Activated CD4-positive, alpha-beta memory T cell treated with anti-CD3 and anti-CD28 coated beads for 36 hours (primary cell): ENCODE measurements at regions of chr9 and their contacts with region 1.

Region 1: GRCh38 chr9:122159026-122159924 is at the starts of genes MORN5 and NDUFA8:
- DNase-seq: peak; percentile 96
- H3K4me3 Mint-ChIP-seq: peak within 1 kb of the TSS; percentile 99
- H3K27ac Mint-ChIP-seq: peak within 1 kb of the TSS; percentile 93
- H3K4me1 Mint-ChIP-seq: peaks cover 38% of the 10 kb centered on the region
- H3K27me3 Mint-ChIP-seq: peaks cover 17% of the 10 kb centered on the region
- total RNA-seq, gene MORN5: not detected
- total RNA-seq, gene NDUFA8: 48.3 to 53.3 TPM

Region 2: GRCh38 chr9:122264360-122265148 is 105.3 kb after region 1 on chr9 and contains the starts of genes MRRF and RBM18:
- CTCF ChIA-PET with region 1: interaction called, 4 read pairs
- POLR2A ChIA-PET with region 1: interaction called, 4 read pairs
- intact Hi-C with region 1: loop called (anchors 1 kb)
- DNase-seq: peak; percentile 94
- H3K4me3 Mint-ChIP-seq: peak within 1 kb of the TSS; percentile 99
- H3K27ac Mint-ChIP-seq: peak within 1 kb of the TSS; percentile 98
- H3K4me1 Mint-ChIP-seq: peaks cover 46% of the 10 kb centered on the region
- H3K27me3 Mint-ChIP-seq: no peaks in the 10 kb centered on the region
- total RNA-seq, gene MRRF: 47.2 to 52.5 TPM
- total RNA-seq, gene RBM18: 25.1 to 25.9 TPM

Region 3: DNA sequence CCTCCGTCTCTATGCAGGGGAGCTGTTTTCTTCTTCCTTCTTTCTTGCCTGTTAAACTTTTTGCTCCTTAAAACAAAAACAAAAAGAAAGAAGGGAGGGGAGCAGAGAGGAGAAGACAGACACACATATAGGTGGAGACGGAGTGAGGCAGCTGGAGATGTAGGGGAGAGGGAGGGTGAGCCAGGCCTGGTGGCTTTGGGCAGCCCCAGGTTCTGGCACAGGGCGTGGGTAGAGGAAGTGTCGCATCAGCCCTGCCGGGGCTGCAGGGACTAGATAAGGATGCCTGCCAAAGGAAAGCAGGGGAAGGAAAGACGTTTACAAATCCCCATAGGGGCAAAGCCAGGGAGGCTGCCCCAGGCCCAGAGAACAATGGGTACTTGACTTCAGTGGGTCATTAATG is 172.8 kb after region 1 on chr9:
- CTCF ChIA-PET with region 1: no interaction called
- POLR2A ChIA-PET with region 1: no interaction called
- intact Hi-C with region 1: no loop called
- DNase-seq: no peak
- H3K4me3 Mint-ChIP-seq: no peak overlapping the region
- H3K27ac Mint-ChIP-seq: no peak overlapping the region
- H3K4me1 Mint-ChIP-seq: no peaks in the 10 kb centered on the region
- H3K27me3 Mint-ChIP-seq: no peaks in the 10 kb centered on the region